ENCODE measurements at regions of chr9 and their contacts with region 1.

Region 1: GRCh38 chr9:94681508-94681907 is 42.2 kb upstream of the FBP1 start:
- DNase-seq: peak; percentile 36 to 96 (median 80)

Region 2: GRCh38 chr9:94498801-94499453 is 182.6 kb before region 1 on chr9:
- intact Hi-C with region 1: no loop called
- DNase-seq: no peak

Region 3: GRCh38 chr9:94746541-94747370 is 65.2 kb after region 1 on chr9:
- intact Hi-C with region 1: no loop called
- DNase-seq: no peak

Region 4: GRCh38 chr9:94967482-94967881 is 286.0 kb after region 1 on chr9:
- intact Hi-C with region 1: loop called (anchors 10 kb)
- DNase-seq: no peak